Activated naive CD4-positive, alpha-beta T cell treated with anti-CD3 and anti-CD28 coated beads, Interleukin-2, amount 10 ng/mL, durations not matched to agents 7 days and 5 days (primary cell): ENCODE measurements at regions of chr3 and their contacts with region 1.

Region 1: GRCh38 chr3:50121416-50122032 is 32.8 kb downstream of the RBM5 start:
- DNase-seq: peak; percentile 82
- H3K4me3 Mint-ChIP-seq: no peak overlapping the region
- H3K27ac Mint-ChIP-seq: no peak overlapping the region
- H3K4me1 Mint-ChIP-seq: no peaks in the 10 kb centered on the region
- H3K27me3 Mint-ChIP-seq: no peaks in the 10 kb centered on the region

Region 2: GRCh38 chr3:50102558-50102957 is 19.0 kb before region 1 on chr3:
- CTCF ChIA-PET with region 1: interaction called, 22 read pairs
- DNase-seq: no peak
- H3K4me3 Mint-ChIP-seq: no peak overlapping the region
- H3K27ac Mint-ChIP-seq: no peak overlapping the region
- H3K4me1 Mint-ChIP-seq: peaks cover 6% of the 10 kb centered on the region
- H3K27me3 Mint-ChIP-seq: no peaks in the 10 kb centered on the region